Transverse colon (tissue), 4 donors: ENCODE measurements at regions of chr3 and their contacts with region 1.

Region 1: DNA sequence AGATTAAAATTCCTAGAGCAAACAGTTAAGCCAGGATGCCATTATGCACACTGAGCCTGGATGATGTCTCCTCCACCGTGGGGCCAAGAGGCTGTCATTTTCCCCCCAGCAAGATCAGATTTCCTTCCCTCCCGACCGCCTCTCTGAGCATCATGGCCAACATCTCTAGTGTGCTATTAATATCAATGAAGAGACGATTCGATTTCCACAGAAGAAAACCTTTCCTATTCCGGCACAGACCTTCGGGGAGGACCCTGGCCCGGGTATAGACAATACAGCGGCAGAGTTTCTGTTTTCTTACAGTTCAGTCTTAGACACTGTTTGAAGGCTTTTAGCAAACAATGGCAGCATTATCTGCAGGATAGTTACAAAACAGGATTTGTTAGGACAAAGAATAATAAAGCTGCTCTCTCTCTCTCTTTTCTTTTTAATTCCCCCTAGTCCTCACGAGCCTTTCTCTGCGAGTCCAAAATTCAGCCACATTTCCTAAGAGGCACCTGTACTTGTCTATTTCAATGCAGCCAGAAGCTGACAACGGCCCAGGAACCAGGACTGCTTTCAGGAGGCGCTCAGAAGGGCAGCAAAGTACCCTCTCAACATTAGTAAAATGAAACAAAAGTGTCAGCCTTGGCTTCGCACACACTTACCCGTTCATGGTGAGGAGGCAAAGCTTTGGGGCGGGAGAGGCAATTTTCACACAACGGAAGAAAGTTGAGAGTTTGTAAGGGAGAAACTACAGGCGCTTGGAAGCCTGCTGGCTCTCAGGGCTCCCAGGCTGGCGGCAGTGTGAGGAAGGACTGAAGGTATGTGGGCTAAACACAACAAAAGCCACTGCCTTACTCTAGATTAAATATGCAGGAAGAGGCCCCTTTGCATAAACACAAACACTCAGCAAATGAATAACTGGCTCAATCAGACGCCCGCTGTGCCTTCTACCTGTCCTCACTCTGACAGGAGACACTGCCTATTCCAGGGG is 278.0 kb downstream of the FOXP1 start:
- DNase-seq: peak; percentile 19
- H3K4me3 ChIP-seq: peak overlapping the region in 3 of 4 donors; percentile 22 to 37 (median 23)
- H3K27ac ChIP-seq: peak overlapping the region; percentile 68 to 84 (median 82)
- H3K4me1 ChIP-seq: peaks cover 10 to 57% (median 29%) of the 10 kb centered on the region in 4 donors
- H3K27me3 ChIP-seq: no peaks in the 10 kb centered on the region
- CTCF ChIP-seq: no peak
- EP300 ChIP-seq: no peak
- POLR2A ChIP-seq: no peak

Region 2: GRCh38 chr3:70716832-70717231 is 588.7 kb before region 1 on chr3:
- in situ Hi-C with region 1: no loop called
- intact Hi-C with region 1: loop called (anchors 10 kb)
- DNase-seq: no peak
- H3K4me3 ChIP-seq: no peak overlapping the region
- H3K27ac ChIP-seq: no peak overlapping the region
- H3K4me1 ChIP-seq: no peaks in the 10 kb centered on the region
- H3K27me3 ChIP-seq: no peaks in the 10 kb centered on the region
- CTCF ChIP-seq: peak in 2 of 5 experiments; percentile 21 to 24
- EP300 ChIP-seq: no peak
- POLR2A ChIP-seq: no peak

Region 3: DNA sequence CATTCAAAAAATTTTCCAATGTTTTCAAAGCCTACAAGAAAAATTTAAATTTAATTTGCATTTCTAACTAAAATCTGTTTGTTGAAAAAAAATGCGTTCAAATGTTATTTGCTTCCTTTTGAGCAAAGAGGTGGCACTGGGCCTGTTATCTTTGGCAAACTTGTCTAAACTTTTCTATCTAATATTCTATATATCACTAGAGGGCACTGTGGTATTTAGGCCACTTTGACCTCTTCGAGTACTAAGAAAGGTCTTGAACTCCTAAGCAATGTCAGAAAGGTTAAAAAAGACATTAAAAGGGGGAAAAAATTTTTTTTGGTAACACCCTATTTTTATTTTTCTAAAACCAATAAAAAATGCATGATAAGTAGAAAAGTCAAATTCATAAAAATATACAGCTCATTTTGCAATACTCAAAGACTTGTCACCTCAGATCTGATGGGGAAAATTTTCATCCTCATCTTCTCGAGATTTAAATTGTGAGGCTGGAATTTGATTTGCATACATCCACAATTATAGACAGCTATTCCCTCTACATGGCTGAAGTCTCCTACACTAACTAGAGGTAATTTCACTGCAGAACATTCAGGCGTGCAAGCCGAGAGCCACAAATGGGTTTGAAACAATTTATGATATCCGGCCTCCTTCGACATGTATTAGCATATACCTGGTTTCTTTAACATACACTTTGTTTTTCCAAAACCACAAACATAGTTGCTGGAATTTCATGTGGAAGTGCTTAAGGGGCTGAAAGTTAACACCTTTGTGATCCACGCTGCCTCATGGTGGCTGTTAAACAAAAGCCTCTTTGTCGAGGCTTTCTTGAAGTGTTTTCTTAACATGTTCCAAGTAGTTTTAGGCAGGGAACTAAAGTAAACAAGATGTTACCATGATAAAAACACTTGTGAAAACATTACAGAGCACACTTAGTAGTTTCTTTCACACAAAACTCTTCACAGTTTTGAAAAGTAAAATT is 298.4 kb before region 1 on chr3:
- in situ Hi-C with region 1: no loop called
- intact Hi-C with region 1: loop called (anchors 10 kb)
- DNase-seq: no peak
- H3K4me3 ChIP-seq: no peak overlapping the region
- H3K27ac ChIP-seq: peak overlapping the region; percentile 66 to 74 (median 70)
- H3K4me1 ChIP-seq: peaks cover 22 to 68% (median 34%) of the 10 kb centered on the region in 4 donors
- H3K27me3 ChIP-seq: no peaks in the 10 kb centered on the region
- CTCF ChIP-seq: peak; percentile 47 to 59 (median 50)
- EP300 ChIP-seq: no peak
- POLR2A ChIP-seq: no peak

Region 4: GRCh38 chr3:71130471-71131374 is 174.8 kb before region 1 on chr3:
- in situ Hi-C with region 1: no loop called
- intact Hi-C with region 1: loop called (anchors 10 kb)
- DNase-seq: peak; percentile 79
- H3K4me3 ChIP-seq: peak overlapping the region; percentile 21 to 64 (median 45)
- H3K27ac ChIP-seq: peak overlapping the region; percentile 86 to 94 (median 93)
- H3K4me1 ChIP-seq: peaks cover 33 to 89% (median 64%) of the 10 kb centered on the region in 4 donors
- H3K27me3 ChIP-seq: no peaks in the 10 kb centered on the region
- CTCF ChIP-seq: no peak
- EP300 ChIP-seq: no peak
- POLR2A ChIP-seq: peak; percentile 85